Psoas muscle (tissue), 8 donors: ENCODE measurements at regions of chr1 and their contacts with region 1.

Region 1: DNA sequence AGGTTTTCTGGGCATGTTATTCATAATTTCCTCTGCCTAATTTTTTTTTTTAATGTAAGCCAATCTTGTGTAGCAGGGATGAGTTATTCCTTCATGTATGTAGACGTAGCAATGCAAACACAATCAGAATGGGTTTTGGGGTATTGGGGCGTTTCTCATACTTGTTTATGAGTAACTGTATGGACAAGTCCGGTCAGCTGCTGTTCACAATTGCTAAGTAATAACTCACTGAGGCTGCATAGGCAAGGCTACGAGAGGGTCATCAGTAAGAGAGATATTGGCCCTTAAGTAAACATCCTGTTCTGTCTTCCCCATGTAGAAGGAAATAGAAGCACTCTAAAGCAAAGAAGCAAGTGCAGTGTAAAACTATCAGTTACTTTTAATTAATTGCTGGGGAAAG is 9.5 kb upstream of the TARS2 start:
- DNase-seq: no peak
- ATAC-seq: peak in 3 of 4 donors; percentile 21 to 38 (median 29)
- H3K4me3 ChIP-seq: no peak overlapping the region
- H3K27ac ChIP-seq: peak overlapping the region; percentile 81
- H3K4me1 ChIP-seq: peaks cover 50% of the 10 kb centered on the region
- H3K27me3 ChIP-seq: no peaks in the 10 kb centered on the region
- CTCF ChIP-seq: no peak

Region 2: GRCh38 chr1:150309770-150310508 is 167.8 kb before region 1 on chr1:
- intact Hi-C with region 1: no loop called
- DNase-seq: no peak
- ATAC-seq: peak in 2 of 4 donors; percentile 12 to 21
- H3K4me3 ChIP-seq: no peak overlapping the region
- H3K27ac ChIP-seq: no peak overlapping the region
- H3K4me1 ChIP-seq: no peaks in the 10 kb centered on the region
- H3K27me3 ChIP-seq: no peaks in the 10 kb centered on the region
- CTCF ChIP-seq: no peak

Region 3: DNA sequence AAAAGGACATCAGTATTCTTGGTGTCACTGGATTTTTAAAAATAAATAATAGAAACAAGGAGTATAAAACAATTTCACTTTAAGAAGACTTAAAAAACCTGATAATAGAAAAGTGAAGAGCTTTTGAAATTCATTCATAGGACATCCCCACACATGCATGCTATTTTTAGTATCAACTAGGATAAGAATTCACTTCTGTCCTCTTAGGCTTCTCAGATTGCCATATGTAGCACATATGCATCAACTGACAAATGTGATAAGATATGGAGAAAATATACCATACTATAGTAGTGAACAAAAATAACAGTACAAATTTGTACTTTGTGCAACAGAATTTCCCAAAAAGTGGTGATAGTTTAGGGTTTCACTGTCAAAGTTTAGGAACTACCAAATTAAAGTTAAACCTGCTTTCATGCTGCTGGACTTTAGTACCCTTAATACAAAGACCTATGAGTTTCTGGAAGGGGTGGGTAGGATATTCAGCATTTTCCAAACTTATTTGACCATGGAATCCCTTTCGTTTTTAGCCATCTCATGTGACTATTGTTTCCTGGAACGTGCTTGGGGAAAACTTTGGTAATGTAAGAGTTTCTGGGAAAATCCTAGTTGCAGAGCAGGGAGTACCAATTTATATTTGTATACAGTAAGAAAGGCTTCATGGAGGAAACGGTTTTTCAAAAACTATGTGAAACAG is 94.0 kb before region 1 on chr1:
- intact Hi-C with region 1: no loop called
- DNase-seq: no peak
- ATAC-seq: no peak
- H3K4me3 ChIP-seq: no peak overlapping the region
- H3K27ac ChIP-seq: no peak overlapping the region
- H3K4me1 ChIP-seq: peaks cover 19% of the 10 kb centered on the region
- H3K27me3 ChIP-seq: no peaks in the 10 kb centered on the region
- CTCF ChIP-seq: no peak

Region 4: DNA sequence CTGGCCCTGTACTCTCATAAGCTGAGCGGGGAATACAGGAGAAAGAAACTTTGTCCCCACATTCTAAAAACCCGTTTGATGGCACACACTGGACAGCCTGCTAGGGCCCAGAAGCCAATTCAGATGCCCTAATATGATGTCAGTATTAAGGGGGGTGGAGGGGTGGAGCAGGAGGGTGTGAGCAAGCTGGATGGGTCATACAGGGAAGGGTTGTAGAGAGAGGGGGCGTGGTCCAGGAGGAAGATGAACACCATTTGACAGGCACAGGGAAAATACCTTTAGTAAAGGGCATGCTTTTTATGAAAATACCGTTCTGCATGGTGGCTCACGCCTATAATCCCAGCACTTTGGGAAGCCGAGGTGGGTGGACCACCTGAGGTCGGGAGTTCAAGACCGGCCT is 15.4 kb after region 1 on chr1:
- intact Hi-C with region 1: no loop called
- DNase-seq: no peak
- ATAC-seq: no peak
- H3K4me3 ChIP-seq: no peak overlapping the region
- H3K27ac ChIP-seq: no peak overlapping the region
- H3K4me1 ChIP-seq: peaks cover 7% of the 10 kb centered on the region
- H3K27me3 ChIP-seq: no peaks in the 10 kb centered on the region
- CTCF ChIP-seq: no peak

Region 5: DNA sequence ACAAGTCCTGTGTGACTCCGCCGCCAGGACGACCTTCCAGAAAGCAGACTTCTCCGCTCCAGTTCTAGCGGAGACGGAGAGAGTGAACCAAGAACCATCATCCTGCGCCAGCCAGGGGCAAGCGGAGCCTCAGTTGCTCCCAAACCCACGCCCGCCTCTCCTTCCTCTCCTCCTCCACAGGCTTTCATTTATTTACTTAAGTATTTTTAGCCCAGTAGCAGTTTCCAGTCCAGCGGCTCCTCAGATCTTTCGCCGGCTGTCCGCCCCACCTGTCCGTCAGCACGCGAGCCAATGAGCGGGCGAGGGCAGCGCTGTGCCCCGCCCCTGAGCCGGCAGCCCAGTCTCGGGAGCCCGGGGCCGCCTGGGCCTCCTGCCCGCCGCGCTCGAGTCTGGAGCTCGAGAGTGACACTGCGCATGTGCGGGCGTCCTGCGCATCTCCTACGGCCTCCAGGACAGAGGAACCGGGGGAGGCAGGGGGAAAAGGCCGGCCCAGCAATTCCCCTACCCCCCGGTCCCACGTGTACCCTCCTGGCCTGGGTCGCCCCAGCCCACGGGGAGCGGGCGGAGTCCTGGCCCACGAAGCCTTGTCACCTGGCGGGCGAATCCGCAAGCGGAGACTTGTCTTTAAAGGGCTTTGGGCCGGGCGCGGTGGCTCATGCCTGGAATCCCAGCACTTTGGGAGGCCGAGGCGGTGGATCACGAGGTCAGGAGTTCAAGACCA is 37.8 kb after region 1 on chr1 and contains the start of gene FALEC:
- intact Hi-C with region 1: loop called in 1 of 2 experiments (anchors 5 kb)
- DNase-seq: peak; percentile 98 to 99
- ATAC-seq: peak; percentile 98 to 99 (median 99)
- H3K4me3 ChIP-seq: peak within 1 kb of the TSS; percentile 74
- H3K27ac ChIP-seq: peak within 1 kb of the TSS; percentile 94
- H3K4me1 ChIP-seq: peaks cover 6% of the 10 kb centered on the region
- H3K27me3 ChIP-seq: no peaks in the 10 kb centered on the region
- CTCF ChIP-seq: no peak
- total RNA-seq, gene FALEC: not detected

Region 6: DNA sequence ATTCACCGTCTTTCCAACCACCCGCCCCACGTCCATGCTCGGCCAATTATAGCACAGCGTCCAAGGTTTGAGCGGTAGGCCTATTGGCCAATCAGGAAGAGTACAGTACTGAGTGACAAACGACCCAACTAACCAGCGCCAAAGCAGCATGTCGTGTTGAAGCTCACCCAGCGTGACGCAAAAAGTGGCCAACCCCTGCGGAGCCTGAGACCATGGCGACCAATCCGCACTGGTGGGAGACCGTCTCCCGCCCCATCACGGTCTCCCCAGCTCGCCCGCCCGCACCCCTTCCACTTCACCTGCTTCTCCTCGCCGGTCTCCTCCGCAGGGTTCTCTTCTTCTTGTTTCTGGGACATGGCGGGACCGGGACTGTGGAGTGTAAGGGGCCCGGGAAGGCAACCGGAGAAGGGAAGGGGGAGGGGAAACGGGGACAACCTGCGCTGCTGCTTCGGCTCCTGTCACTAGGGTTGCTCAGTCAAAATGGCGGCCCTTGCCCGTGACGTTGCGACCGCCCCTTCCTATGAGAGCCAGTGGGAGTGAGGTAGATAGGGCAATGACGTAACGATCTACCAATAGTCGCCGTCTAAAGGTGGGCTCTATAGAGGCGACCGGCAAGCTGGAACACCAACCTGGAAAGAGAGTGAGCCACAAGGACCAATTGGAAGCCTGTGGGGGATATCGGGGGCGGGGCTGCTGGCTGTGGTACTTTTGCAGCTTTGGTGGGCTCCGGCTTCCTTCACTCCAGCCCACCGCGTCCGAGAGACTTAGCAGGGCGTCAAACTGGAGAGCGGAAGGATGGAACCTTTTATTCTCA is 151.6 kb after region 1 on chr1 and contains the start of gene ENSA:
- intact Hi-C with region 1: loop called (anchors 10 kb)
- DNase-seq: peak; percentile 97 to 99
- ATAC-seq: peak; percentile 93 to 96 (median 94)
- H3K4me3 ChIP-seq: peak within 1 kb of the TSS; percentile 77
- H3K27ac ChIP-seq: peak within 1 kb of the TSS; percentile 93
- H3K4me1 ChIP-seq: peaks cover 30% of the 10 kb centered on the region
- H3K27me3 ChIP-seq: no peaks in the 10 kb centered on the region
- CTCF ChIP-seq: no peak
- total RNA-seq, gene ENSA: 120 to 196 (median 162) TPM